CD8-positive, alpha-beta T cell (primary cell): ENCODE measurements at regions of chr11 and their contacts with region 1.

Region 1: GRCh38 chr11:40104941-40105550 is 1354.4 kb downstream of the LRRC4C start:
- DNase-seq: no peak
- ATAC-seq: no peak
- H3K4me3 ChIP-seq: no peak overlapping the region
- H3K4me3 Mint-ChIP-seq: no peak overlapping the region
- H3K27ac ChIP-seq: no peak overlapping the region
- H3K27ac Mint-ChIP-seq: no peak overlapping the region
- H3K4me1 ChIP-seq: no peaks in the 10 kb centered on the region
- H3K4me1 Mint-ChIP-seq: no peaks in the 10 kb centered on the region
- H3K27me3 ChIP-seq: no peaks in the 10 kb centered on the region
- H3K27me3 Mint-ChIP-seq: no peaks in the 10 kb centered on the region
- CTCF ChIP-seq: no peak

Region 2: GRCh38 chr11:40054631-40055030 is 50.4 kb before region 1 on chr11:
- CTCF ChIA-PET with region 1: no interaction called
- POLR2A ChIA-PET with region 1: no interaction called
- intact Hi-C with region 1: loop called in 1 of 2 experiments (anchors 2 kb)
- DNase-seq: no peak
- ATAC-seq: no peak
- H3K4me3 ChIP-seq: no peak overlapping the region
- H3K4me3 Mint-ChIP-seq: no peak overlapping the region
- H3K27ac ChIP-seq: no peak overlapping the region
- H3K27ac Mint-ChIP-seq: no peak overlapping the region
- H3K4me1 ChIP-seq: no peaks in the 10 kb centered on the region
- H3K4me1 Mint-ChIP-seq: no peaks in the 10 kb centered on the region
- H3K27me3 ChIP-seq: no peaks in the 10 kb centered on the region
- H3K27me3 Mint-ChIP-seq: no peaks in the 10 kb centered on the region
- CTCF ChIP-seq: no peak

Region 3: DNA sequence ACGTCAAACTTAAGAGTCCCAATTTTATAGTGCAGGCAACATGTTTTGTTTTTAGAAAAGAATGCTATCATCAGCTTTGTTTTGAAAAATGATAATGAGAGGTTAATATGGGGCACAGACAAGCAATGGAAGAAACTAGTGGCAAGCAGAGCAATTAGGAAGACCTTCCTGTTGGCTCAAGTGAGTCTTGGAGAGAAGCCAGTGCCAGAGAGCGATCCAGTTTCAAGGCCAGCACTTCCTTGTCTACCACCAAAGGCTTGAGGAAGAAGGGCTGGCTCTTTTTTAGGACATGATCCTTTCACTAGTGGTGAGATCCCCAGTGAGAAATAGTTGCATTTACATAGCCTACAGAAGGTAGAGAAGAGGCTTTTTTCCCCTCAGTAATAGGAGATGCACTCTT is 13.7 kb after region 1 on chr11:
- CTCF ChIA-PET with region 1: no interaction called
- POLR2A ChIA-PET with region 1: no interaction called
- intact Hi-C with region 1: no loop called
- DNase-seq: no peak
- ATAC-seq: no peak
- H3K4me3 ChIP-seq: no peak overlapping the region
- H3K4me3 Mint-ChIP-seq: no peak overlapping the region
- H3K27ac ChIP-seq: no peak overlapping the region
- H3K27ac Mint-ChIP-seq: no peak overlapping the region
- H3K4me1 ChIP-seq: no peaks in the 10 kb centered on the region
- H3K4me1 Mint-ChIP-seq: no peaks in the 10 kb centered on the region
- H3K27me3 ChIP-seq: no peaks in the 10 kb centered on the region
- H3K27me3 Mint-ChIP-seq: no peaks in the 10 kb centered on the region
- CTCF ChIP-seq: no peak